Mammary epithelial cell (primary cell): ENCODE measurements at regions of chr17 and their contacts with region 1.

Region 1: DNA sequence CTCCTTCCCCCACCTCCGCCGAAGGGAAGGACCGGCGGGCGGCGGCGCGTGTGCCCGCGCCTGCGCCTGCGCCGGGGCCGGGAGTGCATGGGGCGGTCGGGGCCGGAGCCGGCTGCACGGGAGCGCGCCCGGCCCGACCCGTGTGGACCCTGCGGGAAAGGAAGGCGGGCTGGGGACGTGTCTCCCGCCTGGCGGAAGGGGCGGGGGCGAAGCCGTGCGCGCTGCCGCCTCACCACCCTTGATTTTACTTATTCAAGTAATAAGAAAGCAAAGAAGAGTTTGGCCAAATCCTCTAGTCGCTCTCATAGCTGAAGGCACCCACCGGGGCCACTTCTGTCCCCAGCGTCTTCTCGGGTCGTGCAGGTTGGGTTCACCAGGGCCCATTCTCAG is 596 bp upstream of the PFN1 start:
- DNase-seq: peak; percentile 91
- H3K4me3 ChIP-seq: peak overlapping the region; percentile 74 to 100 (median 98)
- H3K27ac ChIP-seq: peak overlapping the region; percentile 67
- H3K4me1 ChIP-seq: peaks cover 29% of the 10 kb centered on the region
- H3K27me3 ChIP-seq: no peaks in the 10 kb centered on the region
- CTCF ChIP-seq: no peak

Region 2: DNA sequence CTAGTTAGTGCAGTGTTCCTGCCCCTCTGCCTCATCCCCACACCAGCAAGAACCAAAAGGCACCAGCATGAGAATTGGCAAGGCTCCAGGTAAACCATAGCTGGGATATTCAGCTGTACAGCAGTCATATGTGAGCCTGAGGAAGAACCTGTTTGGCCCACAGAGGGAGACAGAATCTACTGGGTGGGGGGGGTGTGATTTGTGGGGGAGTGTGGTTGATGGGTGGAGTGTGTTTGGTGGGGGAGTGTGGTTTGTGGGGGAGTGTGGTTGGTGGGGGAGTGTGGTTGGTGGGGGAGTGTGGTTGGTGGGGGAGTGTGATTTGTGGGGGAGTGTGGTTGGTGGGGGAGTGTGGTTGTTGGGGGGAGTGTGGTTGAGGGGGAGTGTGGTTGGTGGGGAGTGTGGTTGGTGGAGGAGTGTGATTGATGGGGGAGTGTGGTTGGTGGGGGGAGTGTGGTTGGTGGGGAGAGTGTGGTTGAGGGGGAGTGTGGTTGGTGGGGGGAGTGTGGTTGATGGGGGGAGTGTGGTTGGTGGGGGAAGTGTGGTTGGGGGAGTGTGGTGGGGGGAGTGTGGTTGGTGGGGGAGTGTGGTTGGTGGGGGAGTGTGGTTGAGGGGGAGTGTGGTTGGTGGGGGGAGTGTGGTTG is 96.2 kb before region 1 on chr17:
- CTCF ChIA-PET with region 1: no interaction called
- dilution Hi-C with region 1: no loop called
- in situ Hi-C with region 1: no loop called
- intact Hi-C with region 1: loop called (anchors 5 kb)
- DNase-seq: peak; percentile 59
- H3K4me3 ChIP-seq: no peak overlapping the region
- H3K27ac ChIP-seq: peak overlapping the region; percentile 8
- H3K4me1 ChIP-seq: peaks cover 76% of the 10 kb centered on the region
- H3K27me3 ChIP-seq: no peaks in the 10 kb centered on the region
- CTCF ChIP-seq: peak in 1 of 2 donors; percentile 30

Region 3: DNA sequence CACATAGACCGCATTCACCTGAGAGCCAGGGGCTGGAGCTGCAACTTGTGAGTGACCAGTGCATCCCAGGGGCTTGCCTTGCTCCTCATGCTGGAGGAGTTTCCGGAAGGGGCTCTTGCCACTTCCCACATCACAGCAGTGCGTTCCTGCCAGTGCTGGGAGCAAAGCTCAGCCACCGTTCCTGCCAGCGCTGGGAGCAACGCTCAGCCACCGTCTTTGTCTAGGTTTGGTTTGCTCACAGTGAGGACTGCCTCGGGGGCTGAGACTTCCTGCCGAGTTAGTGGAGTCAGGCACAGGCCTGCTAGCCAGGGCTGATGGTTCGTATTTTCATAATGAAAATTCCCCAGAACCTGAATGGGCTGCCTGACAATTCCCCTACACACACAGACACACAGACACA is 40.6 kb before region 1 on chr17:
- CTCF ChIA-PET with region 1: no interaction called
- dilution Hi-C with region 1: no loop called
- in situ Hi-C with region 1: no loop called
- intact Hi-C with region 1: loop called (anchors 1 kb)
- DNase-seq: peak; percentile 87
- H3K4me3 ChIP-seq: no peak overlapping the region
- H3K27ac ChIP-seq: peak overlapping the region; percentile 89
- H3K4me1 ChIP-seq: peaks cover 24% of the 10 kb centered on the region
- H3K27me3 ChIP-seq: no peaks in the 10 kb centered on the region
- CTCF ChIP-seq: no peak

Region 4: GRCh38 chr17:4986951-4987766 is 38.2 kb after region 1 on chr17 and contains the start of gene CAMTA2:
- CTCF ChIA-PET with region 1: no interaction called
- dilution Hi-C with region 1: no loop called
- in situ Hi-C with region 1: no loop called
- intact Hi-C with region 1: loop called (anchors 1 kb)
- DNase-seq: peak; percentile 50
- H3K4me3 ChIP-seq: peak within 1 kb of the TSS; percentile 78 to 91 (median 85)
- H3K27ac ChIP-seq: peak within 1 kb of the TSS; percentile 38
- H3K4me1 ChIP-seq: peaks cover 14% of the 10 kb centered on the region
- H3K27me3 ChIP-seq: no peaks in the 10 kb centered on the region
- CTCF ChIP-seq: peak; percentile 26 to 72
- total RNA-seq, gene CAMTA2: 15.0 to 69.1 TPM

Region 5: DNA sequence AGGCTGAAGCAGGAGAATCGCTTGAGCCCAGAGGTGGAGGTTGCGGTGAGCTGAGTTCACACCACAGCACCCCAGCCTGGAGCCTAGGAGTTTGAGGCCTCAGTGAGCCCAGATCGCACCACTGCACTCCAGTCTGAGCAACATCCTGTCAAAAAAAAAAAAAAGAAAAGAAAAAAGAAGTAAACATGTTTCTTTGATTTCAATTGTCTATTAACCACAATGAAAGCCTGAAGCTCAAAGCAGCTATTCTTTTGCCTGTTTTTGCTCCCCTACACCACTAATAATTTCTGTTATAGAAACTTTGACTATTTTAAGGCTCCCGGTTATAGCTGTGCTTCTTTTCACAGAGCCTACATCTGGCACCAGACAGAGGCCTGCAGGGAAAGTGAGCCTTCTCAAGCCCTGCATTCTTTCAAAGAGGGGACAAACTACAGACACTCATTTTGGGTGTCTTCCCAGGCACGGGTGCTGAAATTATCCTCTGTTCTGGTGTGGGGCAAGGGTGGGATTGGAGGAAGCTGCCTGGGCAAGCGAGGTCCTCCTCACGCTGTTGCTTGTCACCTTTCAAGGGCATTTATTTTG is 100.5 kb after region 1 on chr17:
- CTCF ChIA-PET with region 1: no interaction called
- dilution Hi-C with region 1: loop called (anchors 5 kb)
- in situ Hi-C with region 1: no loop called
- intact Hi-C with region 1: no loop called
- DNase-seq: no peak
- H3K4me3 ChIP-seq: no peak overlapping the region
- H3K27ac ChIP-seq: no peak overlapping the region
- H3K4me1 ChIP-seq: no peaks in the 10 kb centered on the region
- H3K27me3 ChIP-seq: no peaks in the 10 kb centered on the region
- CTCF ChIP-seq: no peak